Activated T-helper 2 cell treated with anti-CD3 and anti-CD28 coated beads, Interferon-gamma antibody, Interleukin-2, Interleukin-4, amounts not matched to agents 10 μg/mL and 5 μg/mL and 100 μg/mL, durations not matched to agents 14 hours and 24 hours and 36 hours (primary cell): ENCODE measurements at regions of chr6 and their contacts with region 1.

Region 1: GRCh38 chr6:10747251-10747972 is at the start of gene TMEM14B:
- DNase-seq: peak; percentile 99
- H3K4me3 Mint-ChIP-seq: peak within 1 kb of the TSS; percentile 95
- H3K27ac Mint-ChIP-seq: peak within 1 kb of the TSS; percentile 94
- H3K4me1 Mint-ChIP-seq: peaks cover 37% of the 10 kb centered on the region
- H3K27me3 Mint-ChIP-seq: no peaks in the 10 kb centered on the region
- total RNA-seq, gene TMEM14B: 85.3 and 94.0 TPM in 2 replicates

Region 2: GRCh38 chr6:10722820-10723566 is 24.4 kb before region 1 on chr6 and contains the start of gene TMEM14C:
- intact Hi-C with region 1: loop called (anchors 1 kb)
- DNase-seq: peak; percentile 88
- H3K4me3 Mint-ChIP-seq: peak within 1 kb of the TSS; percentile 87
- H3K27ac Mint-ChIP-seq: peak within 1 kb of the TSS; percentile 92
- H3K4me1 Mint-ChIP-seq: peaks cover 38% of the 10 kb centered on the region
- H3K27me3 Mint-ChIP-seq: no peaks in the 10 kb centered on the region
- total RNA-seq, gene TMEM14C: 61.3 and 65.4 TPM in 2 replicates